WTC11 (cell line): ENCODE measurements at regions of chr1 and their contacts with region 1.

Region 1: GRCh38 chr1:58783993-58784757 is at the start of gene JUN:
- DNase-seq: peak; percentile 98
- ATAC-seq: peak; percentile 86
- H3K4me3 Mint-ChIP-seq: peak within 1 kb of the TSS; percentile 76
- H3K27ac Mint-ChIP-seq: peak within 1 kb of the TSS; percentile 98
- H3K4me1 Mint-ChIP-seq: peaks cover 34% of the 10 kb centered on the region
- H3K27me3 Mint-ChIP-seq: peaks cover 43% of the 10 kb centered on the region
- CTCF ChIP-seq: no peak
- total RNA-seq, gene JUN: 15.9 to 22.1 TPM (median 21.4 TPM) in 3 replicates

Region 2: DNA sequence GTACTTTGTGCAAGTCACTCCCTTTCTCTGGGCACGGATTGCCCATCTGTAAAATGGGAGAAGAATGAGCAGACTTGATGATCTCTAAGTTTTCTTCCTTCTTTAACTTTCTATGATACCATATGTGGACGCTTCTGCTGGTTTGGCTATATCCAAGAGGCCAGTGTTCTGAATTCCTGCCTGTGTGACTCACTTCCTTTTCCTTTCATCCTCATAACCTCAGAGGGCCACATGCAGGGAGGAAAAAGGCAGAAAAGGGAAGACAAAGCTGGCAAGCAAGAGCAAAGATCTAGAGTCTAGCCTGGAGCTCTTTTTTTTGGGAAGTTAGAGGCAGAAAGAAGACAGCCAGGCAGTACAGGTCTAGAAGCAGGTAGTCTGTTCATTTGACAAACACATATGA is 388.8 kb before region 1 on chr1:
- CTCF ChIA-PET with region 1: no interaction called
- POLR2A ChIA-PET with region 1: interaction called, 11 read pairs
- DNase-seq: no peak
- ATAC-seq: peak; percentile 21; the same call in 1 of the 2 replicates
- H3K4me3 Mint-ChIP-seq: no peak overlapping the region
- H3K27ac Mint-ChIP-seq: peak overlapping the region; percentile 76; the same call in 1 of the 2 replicates
- H3K4me1 Mint-ChIP-seq: peaks cover 43% of the 10 kb centered on the region
- H3K27me3 Mint-ChIP-seq: no peaks in the 10 kb centered on the region; the same call in 1 of the 2 replicates
- CTCF ChIP-seq: no peak

Region 3: DNA sequence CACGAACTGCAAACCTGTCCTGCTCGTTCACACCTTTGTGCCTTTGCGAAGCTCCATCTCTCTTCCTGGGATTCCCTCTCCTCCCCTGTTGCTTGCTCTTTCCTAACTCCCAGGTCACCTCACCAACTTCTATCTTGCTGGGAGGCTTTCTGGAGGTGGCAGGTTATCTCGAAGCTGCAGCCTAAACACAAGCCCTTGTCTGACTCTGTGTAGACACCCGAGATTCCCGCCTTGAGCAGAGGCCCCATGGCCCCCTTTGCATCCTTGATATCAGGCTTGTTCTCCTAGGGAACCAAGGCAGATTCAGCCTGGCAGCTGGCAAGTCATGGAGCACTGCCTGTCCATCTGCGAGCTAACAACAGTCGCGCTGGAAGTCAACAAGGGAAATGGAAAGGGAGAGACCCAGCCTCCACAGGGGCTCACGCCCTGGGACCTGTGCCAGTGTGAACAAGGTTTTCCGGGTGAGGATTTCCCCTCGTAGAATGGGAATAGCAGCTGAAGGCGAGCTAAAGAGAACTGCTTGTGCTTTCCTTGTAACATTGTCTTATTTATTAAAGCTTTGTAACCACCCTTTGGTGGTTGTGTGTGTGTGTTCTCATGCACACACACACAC is 109.2 kb after region 1 on chr1:
- CTCF ChIA-PET with region 1: no interaction called
- POLR2A ChIA-PET with region 1: no interaction called
- DNase-seq: no peak
- ATAC-seq: no peak
- H3K4me3 Mint-ChIP-seq: no peak overlapping the region
- H3K27ac Mint-ChIP-seq: no peak overlapping the region
- H3K4me1 Mint-ChIP-seq: peaks cover 5% of the 10 kb centered on the region; the same call in 1 of the 2 replicates
- H3K27me3 Mint-ChIP-seq: no peaks in the 10 kb centered on the region; the same call in 1 of the 2 replicates
- CTCF ChIP-seq: no peak

Region 4: DNA sequence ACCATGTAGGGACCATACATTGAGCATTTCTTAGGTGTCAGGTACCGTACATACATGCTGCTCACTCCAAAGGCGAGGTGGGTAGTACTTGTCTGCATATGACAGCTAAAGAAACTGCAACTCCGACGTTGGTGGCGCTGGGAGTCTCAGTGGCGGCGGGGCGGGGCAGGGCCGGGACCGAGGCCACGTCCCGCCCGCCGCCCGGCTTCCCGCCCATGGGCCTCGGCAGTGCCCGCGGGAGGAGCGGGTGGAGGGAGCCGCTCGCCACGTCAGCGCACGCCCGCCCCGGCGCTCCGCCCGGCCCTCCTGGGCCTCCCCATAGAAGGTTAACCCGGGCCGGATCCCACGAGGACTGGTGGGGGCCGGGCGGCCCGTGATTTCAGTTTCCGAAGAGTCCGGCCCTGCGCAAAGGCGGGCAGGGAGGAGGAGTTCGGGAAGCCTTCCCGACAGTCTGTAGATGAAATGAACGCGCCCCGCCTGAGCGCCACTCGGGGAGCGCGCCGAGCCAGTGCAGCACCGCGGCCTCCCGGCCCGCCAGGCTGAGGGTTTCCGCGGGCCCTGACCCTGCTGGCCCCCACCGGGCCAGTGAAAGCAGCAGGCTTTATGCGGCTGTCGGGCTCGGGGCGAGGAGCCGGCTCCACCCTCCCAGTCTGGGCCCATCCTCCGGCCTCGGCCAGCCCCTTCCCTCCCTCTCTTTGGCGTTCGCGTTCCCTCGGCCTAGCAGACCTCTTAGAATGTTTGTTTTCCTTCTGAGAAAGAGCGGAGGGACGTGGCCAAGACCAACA is 119.5 kb after region 1 on chr1:
- CTCF ChIA-PET with region 1: interaction called, 5 read pairs
- POLR2A ChIA-PET with region 1: interaction called, 10 read pairs
- DNase-seq: peak; percentile 71
- ATAC-seq: peak; percentile 85
- H3K4me3 Mint-ChIP-seq: peak overlapping the region; percentile 63
- H3K27ac Mint-ChIP-seq: no peak overlapping the region
- H3K4me1 Mint-ChIP-seq: peaks cover 19% of the 10 kb centered on the region
- H3K27me3 Mint-ChIP-seq: peaks cover 8% of the 10 kb centered on the region
- CTCF ChIP-seq: no peak